ENCODE measurements at regions of chr16 and their contacts with region 1.

Region 1: GRCh38 chr16:71894921-71895678 is at the start of gene IST1:
- DNase-seq: peak; percentile 91 to 99
- H3K4me3 ChIP-seq: peak within 1 kb of the TSS; percentile 71 to 81
- H3K27ac ChIP-seq: peak within 1 kb of the TSS; percentile 94 to 97
- H3K4me1 ChIP-seq: peaks cover 0 to 32% of the 10 kb centered on the region in 2 donors
- H3K27me3 ChIP-seq: no peaks in the 10 kb centered on the region
- CTCF ChIP-seq: no peak
- total RNA-seq, gene IST1: 116 TPM

Region 2: GRCh38 chr16:71723537-71724319 is 171.4 kb before region 1 on chr16:
- intact Hi-C with region 1: loop called (anchors 1 kb)
- DNase-seq: peak; percentile 14 to 84
- H3K4me3 ChIP-seq: peak overlapping the region; percentile 87 to 94
- H3K27ac ChIP-seq: peak overlapping the region; percentile 93 to 97
- H3K4me1 ChIP-seq: peaks cover 0 to 17% of the 10 kb centered on the region in 2 donors
- H3K27me3 ChIP-seq: no peaks in the 10 kb centered on the region
- CTCF ChIP-seq: no peak

Region 3: GRCh38 chr16:71845639-71846430 is 49.3 kb before region 1 on chr16 and contains the start of gene ATXN1L:
- intact Hi-C with region 1: loop called (anchors 1 kb)
- DNase-seq: peak; percentile 65 to 96
- H3K4me3 ChIP-seq: peak within 1 kb of the TSS; percentile 81 to 88
- H3K27ac ChIP-seq: peak within 1 kb of the TSS; percentile 83 to 91
- H3K4me1 ChIP-seq: peaks cover 0 to 7% of the 10 kb centered on the region in 2 donors
- H3K27me3 ChIP-seq: no peaks in the 10 kb centered on the region
- CTCF ChIP-seq: no peak
- total RNA-seq, gene ATXN1L: 11.8 TPM

Region 4: DNA sequence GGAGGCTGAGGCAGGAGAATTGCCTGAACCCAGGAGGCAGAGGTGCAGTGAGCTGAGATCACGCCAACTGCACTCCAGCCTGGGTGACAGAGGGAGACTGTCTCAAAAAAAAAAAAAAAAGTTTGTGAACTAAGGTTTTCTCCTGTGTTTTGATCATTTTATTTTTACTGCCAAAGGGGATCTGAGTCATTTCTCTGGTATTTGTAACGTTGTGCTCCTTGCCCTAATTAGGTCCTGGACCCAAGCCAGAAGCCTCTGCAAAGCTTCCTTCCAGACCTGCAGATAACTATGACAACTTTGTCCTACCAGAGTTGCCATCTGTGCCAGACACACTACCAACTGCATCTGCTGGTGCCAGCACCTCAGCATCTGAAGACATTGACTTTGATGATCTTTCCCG is 32.3 kb after region 1 on chr16:
- intact Hi-C with region 1: loop called (anchors 1 kb)
- DNase-seq: peak in 1 of 2 donors; percentile 73
- H3K4me3 ChIP-seq: no peak overlapping the region
- H3K27ac ChIP-seq: peak overlapping the region; percentile 53 to 76
- H3K4me1 ChIP-seq: peaks cover 2 to 26% of the 10 kb centered on the region in 2 donors
- H3K27me3 ChIP-seq: no peaks in the 10 kb centered on the region
- CTCF ChIP-seq: no peak

Region 5: DNA sequence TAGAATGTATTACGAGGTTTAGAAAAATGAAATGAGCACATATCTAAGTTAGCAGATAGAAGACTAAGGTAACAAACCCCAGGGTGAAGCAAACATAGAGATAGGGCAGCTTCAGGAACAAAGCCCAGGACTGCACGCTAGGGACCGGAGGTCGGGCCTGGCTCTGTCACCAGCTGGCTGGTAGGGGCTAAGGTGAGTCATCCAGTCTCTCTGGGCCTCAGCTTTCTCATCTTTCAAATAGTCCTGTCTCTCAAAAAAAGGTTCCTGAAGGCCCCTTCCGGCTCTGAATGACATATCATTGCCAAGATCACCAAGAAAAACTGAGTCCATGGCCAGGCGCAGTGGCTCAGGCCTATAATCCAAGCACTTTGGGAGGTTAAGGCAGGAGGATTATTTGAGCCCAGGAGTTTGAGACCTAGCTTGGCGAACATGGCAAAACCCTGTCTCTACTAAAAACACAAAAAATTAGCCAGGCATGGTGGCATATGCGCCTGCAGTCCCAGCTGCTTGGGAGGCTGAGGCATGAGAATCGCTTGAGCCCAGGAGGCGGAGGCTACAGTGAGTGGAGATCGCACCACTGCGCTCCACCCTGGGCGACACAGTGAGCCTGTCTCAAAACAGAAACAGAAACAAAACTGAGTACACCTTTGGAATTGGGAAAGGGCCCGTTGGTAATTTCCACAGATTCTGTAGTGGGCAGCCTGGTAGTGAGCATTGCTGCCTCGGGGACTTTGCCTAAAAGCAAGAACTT is 79.1 kb after region 1 on chr16:
- intact Hi-C with region 1: no loop called
- DNase-seq: no peak
- H3K4me3 ChIP-seq: no peak overlapping the region
- H3K27ac ChIP-seq: no peak overlapping the region
- H3K4me1 ChIP-seq: no peaks in the 10 kb centered on the region
- H3K27me3 ChIP-seq: no peaks in the 10 kb centered on the region
- CTCF ChIP-seq: no peak

Region 6: GRCh38 chr16:72938795-72939164 is 1043.7 kb after region 1 on chr16:
- intact Hi-C with region 1: loop called (anchors 10 kb)
- DNase-seq: peak; percentile 83 to 94
- H3K4me3 ChIP-seq: peak overlapping the region in 1 of 2 donors; percentile 43
- H3K27ac ChIP-seq: peak overlapping the region; percentile 90 to 91
- H3K4me1 ChIP-seq: peaks cover 32 to 36% of the 10 kb centered on the region in 2 donors
- H3K27me3 ChIP-seq: no peaks in the 10 kb centered on the region
- CTCF ChIP-seq: no peak